ENCODE measurements at regions of chr4 and their contacts with region 1.

Region 1: DNA sequence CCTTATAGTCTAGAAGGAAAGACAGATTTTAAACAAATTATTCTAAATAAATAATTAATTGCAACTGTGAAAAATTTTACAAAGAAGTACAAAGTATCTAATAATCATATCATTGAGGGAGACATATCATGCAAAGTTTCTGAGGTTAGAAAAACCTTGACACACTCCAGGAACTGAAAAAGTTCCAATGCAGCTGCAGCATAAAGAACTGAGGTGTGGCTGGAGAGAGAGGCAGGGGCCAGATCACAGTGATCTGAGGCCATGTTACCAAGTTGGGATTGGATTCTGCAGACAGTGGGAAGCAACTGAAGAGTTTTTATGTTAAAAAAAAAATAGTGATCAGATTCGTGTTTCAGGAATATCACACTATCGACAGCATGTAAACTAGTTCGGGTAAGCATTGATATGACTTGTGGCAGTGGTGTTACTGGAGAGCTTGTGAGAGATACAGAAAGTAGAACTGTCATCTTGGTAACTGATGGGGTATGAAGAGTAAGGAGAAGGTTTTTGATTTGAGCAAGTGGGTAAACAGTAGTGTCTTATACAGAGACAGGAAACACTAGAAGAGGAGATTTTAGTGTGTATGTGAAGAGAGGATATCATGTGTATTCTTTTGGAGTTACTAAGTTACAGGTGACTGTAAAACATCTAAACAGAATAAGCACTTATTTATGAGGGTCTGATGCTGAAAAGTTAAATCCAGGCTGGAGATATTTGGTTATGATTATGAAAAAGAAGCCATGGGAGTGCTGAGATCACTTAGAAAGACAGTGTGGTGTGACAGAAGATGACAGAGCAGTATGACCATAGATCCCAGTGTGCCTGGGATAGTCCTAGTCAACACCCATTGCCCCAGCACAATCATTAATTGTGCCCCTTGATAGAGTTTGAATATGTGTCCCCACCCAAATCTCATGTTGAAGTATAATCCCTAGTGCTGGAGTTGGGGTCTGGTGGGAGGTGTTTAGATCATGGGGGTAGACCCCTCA is 15.6 kb upstream of the SPRY1 start:
- DNase-seq: no peak
- ATAC-seq: no peak
- H3K4me3 ChIP-seq: no peak overlapping the region
- H3K27ac ChIP-seq: no peak overlapping the region
- H3K4me1 ChIP-seq: peaks cover 3% of the 10 kb centered on the region
- H3K27me3 ChIP-seq: no peaks in the 10 kb centered on the region
- CTCF ChIP-seq: no peak
- POLR2A ChIP-seq: no peak

Region 2: GRCh38 chr4:123649645-123650391 is 268.8 kb after region 1 on chr4:
- intact Hi-C with region 1: loop called (anchors 10 kb)
- DNase-seq: peak; percentile 71 to 84 (median 78)
- ATAC-seq: peak; percentile 93
- H3K4me3 ChIP-seq: no peak overlapping the region
- H3K27ac ChIP-seq: peak overlapping the region; percentile 53 to 85 (median 76)
- H3K4me1 ChIP-seq: peaks cover 39% of the 10 kb centered on the region
- H3K27me3 ChIP-seq: no peaks in the 10 kb centered on the region
- CTCF ChIP-seq: peak in 3 of 7 experiments; percentile 13 to 17 (median 14)
- POLR2A ChIP-seq: peak in 2 of 3 donors; percentile 66 to 78

Measured in body of pancreas (tissue), 4 donors.